GM10248 (cell line): ENCODE measurements at regions of chr4 and their contacts with region 1.

Region 1: DNA sequence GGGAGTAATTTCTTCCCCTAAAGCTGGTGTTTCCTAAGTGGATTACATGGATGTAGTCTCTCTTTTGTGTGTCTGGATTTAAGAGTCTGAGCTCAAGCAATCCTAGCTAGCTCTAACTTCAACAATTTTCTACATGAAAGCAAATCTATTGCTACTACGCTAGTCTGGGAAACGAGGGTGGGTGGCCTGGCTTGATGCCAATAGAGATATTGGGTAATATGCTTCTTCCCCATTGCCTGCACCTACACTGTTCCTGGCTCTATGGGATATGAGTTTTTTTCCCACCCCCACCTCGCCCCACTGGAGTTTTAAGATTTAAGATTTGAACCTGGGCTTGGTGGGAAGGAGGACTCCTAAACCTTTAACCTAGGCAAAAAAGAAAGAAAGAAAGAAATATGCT is 158.8 kb downstream of the RBM46 start:
- DNase-seq: no peak
- CTCF ChIP-seq: no peak

Region 2: DNA sequence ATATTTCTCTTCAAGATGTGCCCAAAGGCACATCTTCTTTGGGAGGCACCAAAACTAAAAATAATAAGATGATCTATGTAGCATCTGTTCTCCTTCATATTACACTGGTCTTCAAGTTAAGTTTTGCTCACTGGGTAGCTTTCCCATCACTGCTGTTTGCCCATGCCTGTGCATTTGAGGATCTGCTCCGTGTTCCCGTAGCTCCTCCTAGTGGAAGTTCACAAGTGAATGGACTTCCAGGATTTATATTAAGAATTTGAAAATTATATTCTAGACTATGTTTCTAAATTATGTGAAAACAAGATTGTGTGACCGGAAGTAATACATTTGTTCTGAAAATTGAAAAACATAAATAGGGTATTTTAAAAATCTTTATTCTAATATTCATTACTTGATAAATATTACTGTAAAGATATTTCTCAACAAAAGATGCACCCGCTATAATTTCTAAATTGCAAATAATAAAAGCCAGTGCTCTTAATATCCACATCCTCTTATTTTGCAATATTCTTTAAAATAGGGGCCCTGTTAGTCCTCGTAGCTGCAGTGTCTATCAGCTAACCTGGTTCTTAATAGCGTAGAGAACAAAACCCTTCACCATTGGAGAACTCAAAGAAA is 11.1 kb before region 1 on chr4:
- CTCF ChIA-PET with region 1: interaction called, 17 read pairs
- POLR2A ChIA-PET with region 1: no interaction called
- DNase-seq: no peak
- CTCF ChIP-seq: no peak

Region 3: DNA sequence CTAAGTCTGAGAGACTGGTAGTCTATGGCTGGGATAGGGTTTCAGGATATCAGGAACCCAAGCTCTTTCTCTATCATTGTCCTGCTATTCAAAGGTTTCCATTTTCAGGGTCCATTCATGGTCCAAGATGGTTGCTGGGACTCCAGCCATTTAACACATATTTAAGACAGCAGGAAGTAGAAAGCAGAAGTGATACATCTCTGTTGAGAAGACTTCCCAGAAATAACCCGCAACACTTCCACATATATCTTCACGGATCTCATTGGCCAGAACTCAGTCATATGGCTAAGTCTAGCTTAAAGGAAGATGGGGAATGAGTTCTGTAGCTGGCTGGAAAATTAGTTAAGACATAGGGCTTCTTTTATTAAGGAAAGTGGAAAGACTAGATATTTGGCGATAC is 990.0 kb after region 1 on chr4:
- CTCF ChIA-PET with region 1: no interaction called
- POLR2A ChIA-PET with region 1: no interaction called
- DNase-seq: no peak
- CTCF ChIP-seq: no peak